ENCODE measurements at regions of chr10 and their contacts with region 1.

Region 1: GRCh38 chr10:35195361-35196306 is 69.0 kb downstream of the CREM start:
- DNase-seq: peak; percentile 63 to 97
- ATAC-seq: peak; percentile 82 to 94 (median 84)
- H3K4me3 ChIP-seq: peak overlapping the region; percentile 43
- H3K4me3 Mint-ChIP-seq: peak overlapping the region; percentile 94
- H3K27ac ChIP-seq: peak overlapping the region; percentile 92
- H3K27ac Mint-ChIP-seq: peak overlapping the region; percentile 96 to 98
- H3K4me1 ChIP-seq: peaks cover 16% of the 10 kb centered on the region
- H3K4me1 Mint-ChIP-seq: peaks cover 19 to 42% of the 10 kb centered on the region in 2 donors
- H3K27me3 ChIP-seq: no peaks in the 10 kb centered on the region
- H3K27me3 Mint-ChIP-seq: no peaks in the 10 kb centered on the region
- CTCF ChIP-seq: peak; percentile 88

Region 2: DNA sequence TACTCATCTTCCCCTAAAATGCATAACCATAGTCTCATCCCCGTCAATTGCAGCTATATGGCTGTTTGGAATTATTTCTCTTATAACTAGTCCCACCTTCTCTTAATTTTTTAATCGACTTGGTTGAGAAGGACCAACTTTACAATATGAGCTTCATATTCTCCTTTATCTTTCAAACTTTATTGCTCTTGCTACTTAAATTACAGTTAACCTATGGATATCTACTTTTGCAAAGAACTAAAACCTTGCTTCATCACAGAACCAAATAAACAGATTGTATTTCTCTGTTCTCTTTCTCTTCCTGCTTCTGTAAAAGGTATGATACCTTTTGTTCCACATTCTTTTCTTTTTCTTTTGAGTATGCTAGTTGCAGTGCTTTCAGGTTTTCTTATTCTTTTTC is 62.9 kb before region 1 on chr10:
- intact Hi-C with region 1: loop called (anchors 1 kb)
- DNase-seq: no peak
- ATAC-seq: no peak
- H3K4me3 ChIP-seq: no peak overlapping the region
- H3K4me3 Mint-ChIP-seq: peak overlapping the region; percentile 69
- H3K27ac ChIP-seq: peak overlapping the region; percentile 84
- H3K27ac Mint-ChIP-seq: peak overlapping the region; percentile 89 to 93
- H3K4me1 ChIP-seq: peaks cover 32% of the 10 kb centered on the region
- H3K4me1 Mint-ChIP-seq: peaks cover 39 to 47% of the 10 kb centered on the region in 2 donors
- H3K27me3 ChIP-seq: no peaks in the 10 kb centered on the region
- H3K27me3 Mint-ChIP-seq: no peaks in the 10 kb centered on the region
- CTCF ChIP-seq: no peak

Region 3: GRCh38 chr10:35218339-35218955 is 22.8 kb after region 1 on chr10:
- intact Hi-C with region 1: loop called (anchors 1 kb)
- DNase-seq: peak; percentile 73 to 94
- ATAC-seq: peak; percentile 53 to 80 (median 68)
- H3K4me3 ChIP-seq: no peak overlapping the region
- H3K4me3 Mint-ChIP-seq: peak overlapping the region; percentile 81
- H3K27ac ChIP-seq: peak overlapping the region; percentile 46
- H3K27ac Mint-ChIP-seq: peak overlapping the region; percentile 91 to 96
- H3K4me1 ChIP-seq: peaks cover 35% of the 10 kb centered on the region
- H3K4me1 Mint-ChIP-seq: peaks cover 40 to 42% of the 10 kb centered on the region in 2 donors
- H3K27me3 ChIP-seq: no peaks in the 10 kb centered on the region
- H3K27me3 Mint-ChIP-seq: no peaks in the 10 kb centered on the region
- CTCF ChIP-seq: peak; percentile 77

Region 4: GRCh38 chr10:35336084-35336831 is 140.6 kb after region 1 on chr10 and contains the start of gene CCNY:
- intact Hi-C with region 1: loop called (anchors 5 kb)
- DNase-seq: peak; percentile 69 to 82
- ATAC-seq: peak; percentile 81 to 92 (median 84)
- H3K4me3 ChIP-seq: peak within 1 kb of the TSS; percentile 73
- H3K4me3 Mint-ChIP-seq: peak within 1 kb of the TSS; percentile 98
- H3K27ac ChIP-seq: peak within 1 kb of the TSS; percentile 54
- H3K27ac Mint-ChIP-seq: peak within 1 kb of the TSS; percentile 87 to 92
- H3K4me1 ChIP-seq: peaks cover 20% of the 10 kb centered on the region
- H3K4me1 Mint-ChIP-seq: peaks cover 61 to 71% of the 10 kb centered on the region in 2 donors
- H3K27me3 ChIP-seq: no peaks in the 10 kb centered on the region
- H3K27me3 Mint-ChIP-seq: no peaks in the 10 kb centered on the region
- CTCF ChIP-seq: no peak
- total RNA-seq, gene CCNY: 71.0 to 87.2 (median 74.3) TPM